Activated CD4-positive, alpha-beta memory T cell treated with anti-CD3 and anti-CD28 coated beads for 36 hours (primary cell): ENCODE measurements at regions of chr6 and their contacts with region 1.

Region 1: GRCh38 chr6:85354761-85355618 is 94.9 kb upstream of the NT5E start:
- DNase-seq: peak; percentile 71
- H3K4me3 Mint-ChIP-seq: no peak overlapping the region
- H3K27ac Mint-ChIP-seq: no peak overlapping the region
- H3K4me1 Mint-ChIP-seq: no peaks in the 10 kb centered on the region
- H3K27me3 Mint-ChIP-seq: peaks cover 5% of the 10 kb centered on the region

Region 2: GRCh38 chr6:85368631-85369030 is 13.6 kb after region 1 on chr6:
- CTCF ChIA-PET with region 1: no interaction called
- POLR2A ChIA-PET with region 1: no interaction called
- intact Hi-C with region 1: no loop called
- DNase-seq: no peak
- H3K4me3 Mint-ChIP-seq: no peak overlapping the region
- H3K27ac Mint-ChIP-seq: no peak overlapping the region
- H3K4me1 Mint-ChIP-seq: no peaks in the 10 kb centered on the region
- H3K27me3 Mint-ChIP-seq: peaks cover 7% of the 10 kb centered on the region

Region 3: DNA sequence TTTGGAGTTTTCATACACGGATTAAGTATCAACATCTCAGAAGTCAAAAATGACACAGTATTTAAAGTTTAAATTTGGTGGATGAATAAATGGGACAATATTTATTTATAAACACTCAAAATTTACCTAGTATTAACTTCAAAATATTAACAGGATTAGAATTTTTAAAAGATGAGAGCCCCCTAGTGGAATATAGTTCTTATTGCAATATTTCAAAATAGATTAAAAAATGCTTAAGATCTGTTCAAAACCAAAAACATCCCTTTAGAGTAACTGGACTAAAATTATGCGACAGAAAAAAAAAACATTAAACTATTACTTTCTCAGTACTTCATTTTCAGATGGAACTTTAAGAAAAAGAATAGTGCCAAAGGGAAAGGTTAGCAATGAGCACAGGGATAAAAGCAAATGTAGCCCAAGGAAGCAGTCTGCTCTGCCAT is 182.1 kb after region 1 on chr6:
- CTCF ChIA-PET with region 1: interaction called, 18 read pairs
- POLR2A ChIA-PET with region 1: no interaction called
- intact Hi-C with region 1: loop called (anchors 2 kb)
- DNase-seq: no peak
- H3K4me3 Mint-ChIP-seq: no peak overlapping the region
- H3K27ac Mint-ChIP-seq: no peak overlapping the region
- H3K4me1 Mint-ChIP-seq: no peaks in the 10 kb centered on the region
- H3K27me3 Mint-ChIP-seq: no peaks in the 10 kb centered on the region

Region 4: GRCh38 chr6:85678602-85679444 is 323.8 kb after region 1 on chr6:
- CTCF ChIA-PET with region 1: no interaction called
- POLR2A ChIA-PET with region 1: no interaction called
- intact Hi-C with region 1: loop called (anchors 2 kb)
- DNase-seq: peak; percentile 98
- H3K4me3 Mint-ChIP-seq: peak overlapping the region; percentile 95
- H3K27ac Mint-ChIP-seq: peak overlapping the region; percentile 90
- H3K4me1 Mint-ChIP-seq: peaks cover 34% of the 10 kb centered on the region
- H3K27me3 Mint-ChIP-seq: no peaks in the 10 kb centered on the region

Region 5: GRCh38 chr6:85892346-85892745 is 537.4 kb after region 1 on chr6:
- CTCF ChIA-PET with region 1: no interaction called
- POLR2A ChIA-PET with region 1: no interaction called
- intact Hi-C with region 1: no loop called
- DNase-seq: no peak
- H3K4me3 Mint-ChIP-seq: no peak overlapping the region
- H3K27ac Mint-ChIP-seq: no peak overlapping the region
- H3K4me1 Mint-ChIP-seq: no peaks in the 10 kb centered on the region
- H3K27me3 Mint-ChIP-seq: peaks cover 5% of the 10 kb centered on the region